ENCODE measurements at regions of chr19 and their contacts with region 1.

Region 1: DNA sequence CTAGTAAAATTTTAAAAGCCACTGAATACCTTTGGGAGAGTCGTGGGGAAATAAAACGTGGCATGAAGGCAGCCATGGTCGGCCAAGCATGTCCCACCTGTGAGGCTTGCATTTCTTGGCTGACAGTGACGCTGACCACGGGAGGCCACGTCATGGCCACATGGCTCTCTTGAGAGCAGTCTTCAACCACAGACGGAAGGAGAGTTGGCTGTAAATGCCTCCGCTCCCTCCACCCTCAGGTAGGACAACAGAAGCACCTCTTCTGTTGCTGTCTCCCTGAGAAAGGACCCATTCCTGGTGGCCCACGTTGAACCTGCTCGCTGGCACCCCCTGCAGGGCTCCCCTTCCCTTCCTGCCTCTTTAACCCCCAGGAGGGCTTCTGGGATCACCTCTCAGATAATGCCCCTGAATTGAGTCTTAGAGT is 10.6 kb upstream of the LRRC25 start:
- DNase-seq: peak; percentile 62
- H3K4me3 ChIP-seq: no peak overlapping the region
- H3K27ac ChIP-seq: no peak overlapping the region
- H3K4me1 ChIP-seq: no peaks in the 10 kb centered on the region
- H3K27me3 ChIP-seq: no peaks in the 10 kb centered on the region
- CTCF ChIP-seq: peak; percentile 55
- EP300 ChIP-seq: no peak
- RAD21 ChIP-seq: peak; percentile 48

Region 2: DNA sequence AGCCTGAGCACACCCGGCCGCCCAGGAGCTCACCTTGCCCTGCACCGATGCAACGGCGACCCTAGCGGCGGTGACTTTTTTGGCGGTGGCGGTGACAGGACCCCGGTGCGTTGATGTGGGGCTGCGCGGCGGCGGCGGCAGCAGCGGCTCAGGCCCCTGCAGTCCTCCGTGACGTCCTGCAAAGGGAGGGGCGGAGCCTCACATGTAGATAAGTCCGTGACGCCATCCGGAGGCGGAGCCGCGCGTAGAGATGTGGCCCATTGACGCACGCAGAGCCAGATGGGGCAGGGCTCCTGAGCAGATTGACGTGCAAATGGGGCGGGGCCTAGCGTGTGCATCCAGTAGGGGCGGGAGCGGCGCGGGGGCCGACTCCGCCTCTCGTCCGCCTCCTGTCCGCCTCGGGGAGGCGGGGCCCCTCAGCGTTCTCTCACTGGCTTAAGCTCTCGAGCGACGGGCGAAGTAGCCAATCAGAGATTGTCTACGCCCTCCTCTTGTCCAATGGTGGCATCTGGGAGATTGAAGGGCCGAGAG is 204.1 kb before region 1 on chr19 and contains the start of gene RAB3A:
- CTCF ChIA-PET with region 1: interaction called, 10 read pairs
- POLR2A ChIA-PET with region 1: no interaction called
- DNase-seq: peak; percentile 96
- H3K4me3 ChIP-seq: peak within 1 kb of the TSS; percentile 71 to 82
- H3K27ac ChIP-seq: peak within 1 kb of the TSS; percentile 85 to 93
- H3K4me1 ChIP-seq: peaks cover 4 to 20% of the 10 kb centered on the region in 2 experiments; a peak in 2 of 4 replicates
- H3K27me3 ChIP-seq: no peaks in the 10 kb centered on the region
- CTCF ChIP-seq: no peak
- EP300 ChIP-seq: no peak
- RAD21 ChIP-seq: no peak
- polyA plus RNA-seq, gene RAB3A: 9.1 and 9.7 TPM in 2 replicates

Region 3: GRCh38 chr19:18328340-18329034 is 79.6 kb before region 1 on chr19:
- CTCF ChIA-PET with region 1: interaction called, 22 read pairs
- POLR2A ChIA-PET with region 1: interaction called, 4 read pairs
- DNase-seq: peak; percentile 94
- H3K4me3 ChIP-seq: peak overlapping the region; percentile 39 to 52
- H3K27ac ChIP-seq: peak overlapping the region; percentile 63 to 84
- H3K4me1 ChIP-seq: peaks cover 10 to 14% of the 10 kb centered on the region in 2 experiments; a peak in 2 of 4 replicates
- H3K27me3 ChIP-seq: no peaks in the 10 kb centered on the region
- CTCF ChIP-seq: peak; percentile 93
- EP300 ChIP-seq: peak in 1 of 2 experiments; percentile 53; a peak in 2 of 4 replicates
- RAD21 ChIP-seq: peak; percentile 90

Region 4: DNA sequence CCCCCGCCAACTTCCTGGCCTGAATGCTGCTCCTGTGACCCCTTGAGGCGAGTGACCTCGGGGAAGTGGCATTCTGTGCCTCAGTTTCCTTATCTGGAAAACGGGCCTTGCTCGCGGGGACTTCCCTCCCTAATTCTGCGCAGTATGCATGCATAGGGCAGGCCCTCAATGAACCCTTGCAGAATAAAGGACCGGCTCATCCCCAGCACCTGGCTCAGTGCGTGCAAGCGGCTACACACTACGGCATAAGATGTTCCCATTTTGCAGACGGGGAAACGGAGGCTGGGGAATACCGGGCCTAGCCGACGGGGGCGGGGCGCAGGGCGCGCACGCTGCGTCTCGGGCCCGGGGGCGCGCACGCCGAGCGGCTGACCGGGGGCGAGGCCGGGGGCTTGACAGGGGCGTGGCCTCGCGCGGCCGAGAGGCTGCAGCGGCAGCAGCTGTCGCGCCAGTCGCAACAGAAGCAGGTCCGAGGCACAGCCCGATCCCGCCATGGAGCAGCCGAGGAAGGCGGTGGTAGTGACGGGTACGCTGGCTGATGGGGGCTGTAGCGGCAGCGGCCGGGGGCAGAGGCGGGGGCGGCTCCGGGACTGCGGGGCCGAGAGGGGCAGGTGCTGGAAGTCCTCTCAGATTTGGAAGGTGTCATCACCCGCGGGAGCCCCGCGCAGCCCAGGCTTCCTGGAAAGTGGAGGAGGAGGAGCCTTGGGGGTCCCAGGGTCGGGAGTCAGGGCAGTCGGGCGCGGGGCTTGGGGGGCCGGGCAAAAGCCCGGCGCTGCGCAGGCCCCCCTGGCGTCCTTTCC is 67.7 kb before region 1 on chr19 and contains the start of gene PGPEP1:
- CTCF ChIA-PET with region 1: interaction called, 217 read pairs
- POLR2A ChIA-PET with region 1: no interaction called
- DNase-seq: peak; percentile 96
- H3K4me3 ChIP-seq: peak within 1 kb of the TSS; percentile 59 to 90
- H3K27ac ChIP-seq: no peak within 1 kb of the TSS; a peak in 1 of 4 replicates
- H3K4me1 ChIP-seq: peaks cover 0 to 9% of the 10 kb centered on the region in 2 experiments; a peak in 1 of 4 replicates
- H3K27me3 ChIP-seq: no peaks in the 10 kb centered on the region
- CTCF ChIP-seq: no peak
- EP300 ChIP-seq: no peak
- RAD21 ChIP-seq: no peak
- polyA plus RNA-seq, gene PGPEP1: 13.8 and 13.9 TPM in 2 replicates

Region 5: DNA sequence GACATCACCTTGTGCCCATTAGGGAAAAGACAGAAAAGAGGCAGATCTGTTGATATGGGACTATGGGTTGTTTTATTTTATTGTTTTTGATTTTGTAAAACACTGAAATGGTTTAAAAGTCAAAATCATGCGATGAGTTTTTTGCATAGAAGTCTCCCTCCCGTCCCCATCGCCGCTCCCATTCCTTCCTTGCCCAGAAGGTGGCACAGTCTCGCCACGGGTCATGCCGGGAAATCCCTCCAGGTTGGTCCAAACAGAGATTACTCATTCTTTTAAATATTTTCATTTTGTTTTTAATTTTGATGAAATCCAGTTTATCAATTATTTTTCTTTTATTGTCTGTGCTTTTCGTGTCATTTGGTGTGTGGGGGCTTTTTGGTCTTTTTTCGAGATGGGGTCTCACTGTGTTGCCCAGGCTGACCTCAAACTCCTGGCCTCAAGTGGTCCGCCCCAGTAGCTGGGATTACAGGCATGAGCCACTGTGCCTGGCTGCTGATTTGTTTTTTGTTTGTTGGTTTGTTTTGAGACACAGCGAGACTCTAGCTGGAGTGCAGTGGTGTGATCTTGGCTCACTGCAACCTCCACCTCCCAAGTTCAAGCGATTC is 58.4 kb before region 1 on chr19:
- CTCF ChIA-PET with region 1: interaction called, 217 read pairs
- POLR2A ChIA-PET with region 1: no interaction called
- DNase-seq: peak; percentile 84
- H3K4me3 ChIP-seq: no peak overlapping the region
- H3K27ac ChIP-seq: no peak overlapping the region
- H3K4me1 ChIP-seq: no peaks in the 10 kb centered on the region
- H3K27me3 ChIP-seq: no peaks in the 10 kb centered on the region
- CTCF ChIP-seq: peak; percentile 96
- EP300 ChIP-seq: no peak
- RAD21 ChIP-seq: peak; percentile 95

Region 6: DNA sequence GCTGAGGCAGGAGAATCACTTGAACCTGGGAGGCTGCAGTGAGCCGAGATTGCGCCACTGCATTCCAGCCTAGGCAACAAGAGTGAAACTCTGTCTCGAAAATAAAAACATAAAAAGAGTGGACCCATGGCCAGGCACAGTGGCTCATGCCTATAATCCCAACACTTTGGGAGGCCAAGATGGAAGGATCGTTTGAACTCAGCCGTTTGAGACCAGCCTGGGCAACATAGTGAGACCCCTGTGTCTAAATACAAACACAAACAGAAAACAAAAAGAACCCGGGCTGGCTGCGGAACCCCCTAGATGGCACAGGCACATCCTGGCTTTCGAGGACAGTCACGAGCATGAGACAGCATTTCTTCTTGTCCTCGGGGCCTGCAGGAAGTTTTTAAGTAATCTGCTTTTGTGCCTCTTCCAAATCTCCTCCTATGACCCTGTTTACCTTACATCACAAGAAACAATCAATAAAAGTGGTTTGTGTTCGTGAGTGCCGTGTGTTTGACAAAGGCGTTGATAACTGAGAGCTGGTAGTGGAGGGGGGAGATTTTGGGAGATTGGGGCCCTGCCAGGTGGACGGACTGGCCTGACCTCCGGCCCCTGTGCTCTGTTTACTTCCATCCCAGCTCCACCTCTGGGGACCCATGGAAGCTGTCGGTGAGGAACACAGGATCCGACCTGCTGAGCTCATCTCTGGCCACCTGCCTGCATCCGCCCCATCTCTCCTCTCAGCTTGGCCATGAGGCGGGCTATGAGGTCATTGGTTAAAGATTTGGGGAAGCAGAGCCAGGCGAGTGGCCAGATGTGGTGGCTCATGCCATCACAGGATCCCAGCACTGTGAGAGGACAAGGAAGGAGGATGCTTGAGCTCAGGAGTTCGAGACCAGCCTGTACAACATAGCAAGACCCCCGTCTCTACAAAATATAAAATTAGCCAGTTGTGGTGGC is 28.0 kb before region 1 on chr19:
- CTCF ChIA-PET with region 1: interaction called, 22 read pairs
- POLR2A ChIA-PET with region 1: no interaction called
- DNase-seq: no peak
- H3K4me3 ChIP-seq: no peak overlapping the region
- H3K27ac ChIP-seq: no peak overlapping the region
- H3K4me1 ChIP-seq: peaks cover 0 to 8% of the 10 kb centered on the region in 2 experiments; a peak in 2 of 4 replicates
- H3K27me3 ChIP-seq: no peaks in the 10 kb centered on the region
- CTCF ChIP-seq: no peak
- EP300 ChIP-seq: no peak
- RAD21 ChIP-seq: no peak

Region 7: GRCh38 chr19:18419195-18419698 is 11.2 kb after region 1 on chr19 and contains the start of gene SSBP4:
- CTCF ChIA-PET with region 1: interaction called, 10 read pairs
- POLR2A ChIA-PET with region 1: no interaction called
- DNase-seq: peak; percentile 97
- H3K4me3 ChIP-seq: peak within 1 kb of the TSS; percentile 68 to 74
- H3K27ac ChIP-seq: peak within 1 kb of the TSS; percentile 89 to 93; a peak in 3 of 4 replicates
- H3K4me1 ChIP-seq: peaks cover 41 to 53% of the 10 kb centered on the region in 2 experiments; a peak in 3 of 4 replicates
- H3K27me3 ChIP-seq: no peaks in the 10 kb centered on the region
- CTCF ChIP-seq: peak; percentile 12; the same call in 1 of the 2 replicates
- EP300 ChIP-seq: peak; percentile 59 to 65; a peak in 2 of 4 replicates
- RAD21 ChIP-seq: no peak
- polyA plus RNA-seq, gene SSBP4: 22.5 and 24.9 TPM in 2 replicates

Measured in SK-N-SH (cell line).